PC-3 (cell line): ENCODE measurements at regions of chr10 and their contacts with region 1.

Region 1: GRCh38 chr10:69451209-69451783 is at the start of gene TSPAN15:
- DNase-seq: peak; percentile 99
- ATAC-seq: peak; percentile 54
- H3K4me3 ChIP-seq: peak within 1 kb of the TSS; percentile 80
- H3K27ac ChIP-seq: peak within 1 kb of the TSS; percentile 89
- H3K4me1 ChIP-seq: peaks cover 86% of the 10 kb centered on the region
- H3K27me3 ChIP-seq: no peaks in the 10 kb centered on the region
- CTCF ChIP-seq: no peak
- total RNA-seq, gene TSPAN15: 186 and 212 TPM in 2 replicates

Region 2: DNA sequence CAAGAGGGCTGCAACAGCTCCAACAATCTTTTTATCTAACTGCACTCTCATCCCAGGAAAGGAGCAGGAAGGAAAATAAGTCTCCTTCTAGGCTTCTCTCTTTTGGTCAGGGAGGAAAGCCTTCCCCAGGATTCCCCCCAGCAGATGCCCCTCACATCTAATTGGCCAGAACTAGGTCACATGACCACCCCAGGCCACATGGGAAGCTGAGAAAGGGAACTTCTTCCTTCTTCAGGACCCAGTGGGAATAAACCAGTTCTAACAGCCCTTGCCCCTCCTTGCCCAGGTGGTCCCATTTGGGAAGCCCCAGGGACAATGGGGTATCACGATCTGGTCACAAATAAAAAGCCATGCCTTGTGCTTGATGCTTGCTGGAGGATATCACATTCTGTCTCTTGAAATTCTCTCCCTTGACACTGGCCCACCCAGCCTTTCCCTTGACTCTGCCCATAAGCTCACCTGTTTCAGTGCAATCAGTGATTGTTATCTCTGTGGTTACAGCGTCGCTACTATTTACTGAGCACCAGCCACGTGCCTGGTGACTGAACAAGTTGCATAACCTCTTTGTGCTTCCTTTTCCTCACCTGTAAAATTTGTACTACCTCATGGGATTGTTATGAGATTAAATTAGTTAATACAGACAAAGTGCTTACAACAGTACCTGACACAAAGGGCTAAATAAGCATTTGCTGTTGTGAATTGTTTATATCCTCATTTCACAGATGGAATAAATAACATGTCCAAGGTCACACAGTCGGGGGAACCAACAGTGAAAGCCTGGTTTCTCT is 25.6 kb before region 1 on chr10:
- CTCF ChIA-PET with region 1: interaction called, 5 read pairs
- POLR2A ChIA-PET with region 1: interaction called, 4 read pairs
- intact Hi-C with region 1: loop called (anchors 1 kb)
- DNase-seq: peak; percentile 89
- ATAC-seq: peak; percentile 52; the same call in 1 of the 2 replicates
- H3K4me3 ChIP-seq: no peak overlapping the region
- H3K27ac ChIP-seq: 0 out of 2 replicates have a peak overlapping the region, but pooled peaks have one; percentile 1
- H3K4me1 ChIP-seq: peaks cover 19% of the 10 kb centered on the region
- H3K27me3 ChIP-seq: no peaks in the 10 kb centered on the region
- CTCF ChIP-seq: no peak

Region 3: DNA sequence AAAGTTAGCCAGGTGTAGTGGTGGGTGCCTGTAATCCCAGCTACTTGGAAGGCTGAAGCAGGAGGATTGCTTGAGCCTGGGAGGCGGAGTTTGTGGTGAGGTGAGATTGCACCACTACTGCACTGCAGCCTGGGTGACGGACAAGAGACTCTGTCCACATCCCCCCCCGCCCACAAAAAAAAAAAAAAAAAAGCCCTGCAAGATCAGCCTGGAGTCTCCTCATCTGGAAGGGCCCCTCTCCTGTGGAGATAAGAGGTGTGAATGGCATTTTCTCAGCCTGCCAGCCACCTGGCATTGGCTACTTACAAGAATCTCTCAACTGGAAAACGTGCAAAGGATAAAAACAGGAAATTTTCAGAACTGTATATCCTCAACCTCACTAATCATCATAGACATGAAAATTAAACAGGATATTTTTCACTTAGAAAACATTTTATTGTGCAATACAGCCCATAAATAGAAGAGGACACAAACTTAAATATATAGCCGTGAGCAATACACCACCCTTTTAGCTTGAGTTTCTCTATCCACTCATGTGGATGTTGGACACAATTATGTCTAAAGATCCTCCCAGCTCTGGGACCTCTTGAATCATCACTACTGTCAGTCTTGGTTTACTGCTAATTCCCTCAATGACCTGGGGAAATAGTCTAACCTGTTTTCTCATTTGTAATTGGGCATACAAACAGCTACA is 11.3 kb before region 1 on chr10:
- CTCF ChIA-PET with region 1: interaction called, 8 read pairs
- POLR2A ChIA-PET with region 1: interaction called, 7 read pairs
- intact Hi-C with region 1: loop called (anchors 1 kb)
- DNase-seq: peak; percentile 96
- ATAC-seq: peak; percentile 45
- H3K4me3 ChIP-seq: peak overlapping the region; percentile 31; the same call in 1 of the 2 replicates
- H3K27ac ChIP-seq: peak overlapping the region; percentile 91
- H3K4me1 ChIP-seq: peaks cover 53% of the 10 kb centered on the region
- H3K27me3 ChIP-seq: no peaks in the 10 kb centered on the region
- CTCF ChIP-seq: no peak

Region 4: GRCh38 chr10:69464801-69465401 is 13.6 kb after region 1 on chr10:
- CTCF ChIA-PET with region 1: interaction called, 6 read pairs
- POLR2A ChIA-PET with region 1: interaction called, 10 read pairs
- intact Hi-C with region 1: no loop called
- DNase-seq: no peak
- ATAC-seq: peak; percentile 25
- H3K4me3 ChIP-seq: no peak overlapping the region
- H3K27ac ChIP-seq: no peak overlapping the region
- H3K4me1 ChIP-seq: peaks cover 49% of the 10 kb centered on the region
- H3K27me3 ChIP-seq: no peaks in the 10 kb centered on the region
- CTCF ChIP-seq: no peak

Region 5: DNA sequence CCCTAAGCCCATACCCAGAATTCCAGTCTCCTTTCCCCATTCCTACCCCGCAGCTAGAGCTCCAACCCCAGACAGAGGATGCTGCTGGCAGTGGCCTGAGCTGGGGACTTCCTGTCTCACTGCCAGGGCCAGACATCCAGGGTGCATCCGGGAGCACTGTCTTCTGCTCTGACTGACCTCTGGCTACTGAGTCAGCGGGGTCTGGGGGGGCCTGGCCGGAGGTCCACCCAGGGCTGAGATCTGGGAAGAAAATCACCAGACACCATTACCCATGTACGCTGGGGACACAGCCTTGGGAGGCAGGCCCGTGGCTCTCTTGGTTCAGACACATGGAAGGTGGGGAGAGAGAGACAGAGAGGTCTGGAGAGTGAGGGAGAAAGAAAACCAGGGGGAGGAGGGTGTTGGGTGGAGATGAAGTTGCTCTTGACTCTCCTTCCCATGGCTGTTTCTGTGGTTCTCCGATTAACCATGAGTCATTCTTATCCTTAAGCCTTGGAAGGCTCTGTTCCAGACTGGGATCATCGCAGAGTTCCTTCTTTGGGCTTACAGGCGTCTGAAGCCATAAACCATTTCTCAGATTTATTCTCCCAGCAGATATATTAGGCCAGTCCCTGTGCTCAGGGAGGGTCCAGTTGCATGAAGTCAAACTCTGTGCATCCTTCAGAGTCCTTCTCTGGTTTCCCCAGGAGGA is 23.6 kb after region 1 on chr10:
- CTCF ChIA-PET with region 1: no interaction called
- POLR2A ChIA-PET with region 1: no interaction called
- intact Hi-C with region 1: loop called (anchors 2 kb)
- DNase-seq: peak; percentile 97
- ATAC-seq: peak; percentile 90
- H3K4me3 ChIP-seq: peak overlapping the region; percentile 35; the same call in 1 of the 2 replicates
- H3K27ac ChIP-seq: peak overlapping the region; percentile 74
- H3K4me1 ChIP-seq: peaks cover 29% of the 10 kb centered on the region
- H3K27me3 ChIP-seq: no peaks in the 10 kb centered on the region
- CTCF ChIP-seq: no peak

Region 6: DNA sequence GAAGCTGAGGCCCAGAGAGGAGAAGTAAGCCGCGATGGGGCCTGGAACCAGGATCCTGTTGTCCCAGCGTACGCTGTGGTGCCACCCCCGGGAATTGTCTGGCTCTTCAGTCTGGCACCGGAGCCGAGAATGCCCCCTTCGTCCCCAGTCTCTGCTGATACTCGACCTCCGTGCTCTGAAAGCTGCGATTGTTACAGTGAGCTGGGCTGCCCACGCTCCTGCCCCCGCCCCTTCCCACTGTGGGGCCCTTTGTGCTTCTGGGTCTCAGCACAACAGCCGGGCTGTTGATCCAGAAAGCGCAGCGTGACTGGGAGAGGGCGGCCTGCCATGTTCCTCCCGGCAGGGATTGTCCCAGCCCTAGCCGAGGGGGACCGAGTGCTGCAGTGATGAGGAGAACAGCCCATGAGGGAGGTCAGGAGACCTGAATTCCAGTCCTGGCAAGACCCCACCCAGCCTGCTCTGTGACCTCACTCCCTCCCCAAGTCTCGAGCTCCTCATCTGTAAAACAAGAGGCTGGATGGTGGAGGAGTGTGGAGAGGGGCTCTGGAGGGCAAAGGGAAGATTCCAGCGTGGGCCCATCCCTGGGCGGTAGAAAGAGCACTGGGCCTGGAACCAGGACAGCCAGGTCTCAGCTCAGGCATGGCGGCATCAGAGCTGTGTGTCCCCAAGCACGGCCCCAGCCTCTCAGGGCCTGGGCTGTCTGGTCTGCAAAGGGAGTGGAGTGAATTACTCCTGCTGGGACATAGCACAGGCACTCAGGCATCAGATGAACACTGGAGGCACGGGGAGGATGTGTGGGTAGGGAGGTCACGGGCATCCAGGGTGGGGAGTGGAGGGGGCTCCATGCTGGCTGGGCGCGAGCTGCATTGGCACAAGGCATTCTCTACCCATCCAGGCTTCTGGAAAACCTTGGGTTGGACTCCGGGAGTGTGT is 43.6 kb after region 1 on chr10:
- CTCF ChIA-PET with region 1: interaction called, 3 read pairs
- POLR2A ChIA-PET with region 1: interaction called, 22 read pairs
- intact Hi-C with region 1: no loop called
- DNase-seq: no peak
- ATAC-seq: no peak
- H3K4me3 ChIP-seq: no peak overlapping the region
- H3K27ac ChIP-seq: no peak overlapping the region
- H3K4me1 ChIP-seq: peaks cover 15% of the 10 kb centered on the region
- H3K27me3 ChIP-seq: no peaks in the 10 kb centered on the region
- CTCF ChIP-seq: no peak

Region 7: GRCh38 chr10:69742928-69743602 is 291.8 kb after region 1 on chr10:
- CTCF ChIA-PET with region 1: no interaction called
- POLR2A ChIA-PET with region 1: no interaction called
- intact Hi-C with region 1: no loop called
- DNase-seq: peak; percentile 56
- ATAC-seq: peak; percentile 29
- H3K4me3 ChIP-seq: no peak overlapping the region
- H3K27ac ChIP-seq: no peak overlapping the region
- H3K4me1 ChIP-seq: peaks cover 11% of the 10 kb centered on the region
- H3K27me3 ChIP-seq: no peaks in the 10 kb centered on the region
- CTCF ChIP-seq: peak; percentile 76

Region 8: DNA sequence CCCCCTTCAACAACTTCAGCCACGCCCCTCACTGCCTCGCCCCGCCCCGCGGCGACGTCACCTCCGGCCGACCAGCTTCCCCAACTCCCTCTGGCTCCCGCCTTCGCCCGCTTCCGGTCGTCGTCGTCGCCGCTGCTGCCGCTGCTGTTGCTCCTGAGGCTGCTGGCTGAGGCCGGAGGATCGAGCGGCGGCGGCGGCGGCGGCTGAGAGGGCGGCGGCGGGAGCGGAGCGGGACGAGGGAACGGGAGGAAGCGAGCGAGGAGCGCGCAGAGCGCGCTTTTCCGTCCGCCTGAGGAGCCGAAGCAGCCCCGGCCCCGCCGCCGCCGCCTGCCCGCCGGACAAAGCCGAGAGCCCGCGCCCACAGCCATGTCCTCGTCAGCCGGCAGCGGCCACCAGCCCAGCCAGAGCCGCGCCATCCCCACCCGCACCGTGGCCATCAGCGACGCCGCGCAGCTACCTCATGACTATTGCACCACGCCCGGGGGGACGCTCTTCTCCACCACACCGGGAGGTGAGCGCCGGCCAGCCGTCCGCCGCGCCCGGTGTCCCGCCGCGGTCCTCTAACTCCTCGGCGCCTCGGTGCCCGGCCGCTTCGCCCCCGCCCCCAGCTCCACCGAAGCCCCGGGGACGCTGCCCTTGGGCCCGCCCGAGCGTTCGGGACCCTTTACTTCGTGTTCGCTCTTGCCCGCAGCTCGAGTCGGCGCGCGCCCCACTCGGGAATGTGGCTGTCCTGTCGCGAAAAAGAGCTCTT is 952.9 kb after region 1 on chr10 and contains the start of gene EIF4EBP2:
- CTCF ChIA-PET with region 1: interaction called, 4 read pairs
- POLR2A ChIA-PET with region 1: no interaction called
- intact Hi-C with region 1: loop called (anchors 10 kb)
- DNase-seq: peak; percentile 99
- ATAC-seq: peak; percentile 31
- H3K4me3 ChIP-seq: peak within 1 kb of the TSS; percentile 75
- H3K27ac ChIP-seq: peak within 1 kb of the TSS; percentile 18
- H3K4me1 ChIP-seq: peaks cover 24% of the 10 kb centered on the region
- H3K27me3 ChIP-seq: no peaks in the 10 kb centered on the region
- CTCF ChIP-seq: no peak
- total RNA-seq, gene EIF4EBP2: 29.2 and 32.6 TPM in 2 replicates